ENCODE measurements at regions of chr11 and their contacts with region 1.

Region 1: GRCh38 chr11:67239783-67240575 is 26.3 kb upstream of the GRK2 start:
- DNase-seq: peak; percentile 87 to 98 (median 96)
- ATAC-seq: peak; percentile 85 to 86
- H3K4me3 Mint-ChIP-seq: peak overlapping the region; percentile 94 to 100 (median 98)
- H3K27ac Mint-ChIP-seq: peak overlapping the region; percentile 97 to 100 (median 100)
- H3K4me1 Mint-ChIP-seq: peaks cover 37 to 61% (median 54%) of the 10 kb centered on the region in 4 donors
- H3K27me3 Mint-ChIP-seq: no peaks in the 10 kb centered on the region

Region 2: GRCh38 chr11:67167086-67167485 is 72.9 kb before region 1 on chr11:
- POLR2A ChIA-PET with region 1: no interaction called
- DNase-seq: no peak
- ATAC-seq: no peak
- H3K4me3 Mint-ChIP-seq: no peak overlapping the region
- H3K27ac Mint-ChIP-seq: peak overlapping the region in 5 of 10 donors; percentile 5 to 75 (median 65)
- H3K4me1 Mint-ChIP-seq: peaks cover 15 to 61% (median 48%) of the 10 kb centered on the region in 4 donors
- H3K27me3 Mint-ChIP-seq: no peaks in the 10 kb centered on the region

Region 3: DNA sequence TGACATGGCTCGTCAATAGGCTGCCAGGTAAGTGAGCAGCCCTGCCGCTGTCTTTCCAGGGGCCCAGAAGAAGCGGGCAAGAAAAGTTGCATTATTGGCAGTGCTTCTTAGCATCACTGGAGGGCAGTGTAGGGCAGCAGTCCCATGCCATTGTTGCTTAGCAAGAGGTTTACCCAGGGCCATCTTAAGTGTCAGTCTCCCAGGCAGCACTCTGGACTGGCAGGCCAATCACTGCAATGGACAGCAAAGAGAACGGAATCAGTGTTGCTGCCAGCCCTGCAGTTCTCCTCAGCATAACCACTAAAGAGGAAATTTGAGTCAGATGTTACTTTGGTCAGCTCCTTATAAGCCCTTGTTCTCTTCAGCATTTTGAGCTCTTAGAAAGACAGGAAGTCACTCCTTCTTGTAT is 12.9 kb after region 1 on chr11:
- POLR2A ChIA-PET with region 1: interaction called, 24 read pairs
- DNase-seq: peak in 5 of 10 donors; percentile 41 to 56 (median 52)
- ATAC-seq: peak; percentile 62 to 84
- H3K4me3 Mint-ChIP-seq: peak overlapping the region in 4 of 10 donors; percentile 0 to 41 (median 10)
- H3K27ac Mint-ChIP-seq: peak overlapping the region; percentile 12 to 87 (median 68)
- H3K4me1 Mint-ChIP-seq: peaks cover 20 to 50% (median 30%) of the 10 kb centered on the region in 4 donors
- H3K27me3 Mint-ChIP-seq: no peaks in the 10 kb centered on the region

Region 4: DNA sequence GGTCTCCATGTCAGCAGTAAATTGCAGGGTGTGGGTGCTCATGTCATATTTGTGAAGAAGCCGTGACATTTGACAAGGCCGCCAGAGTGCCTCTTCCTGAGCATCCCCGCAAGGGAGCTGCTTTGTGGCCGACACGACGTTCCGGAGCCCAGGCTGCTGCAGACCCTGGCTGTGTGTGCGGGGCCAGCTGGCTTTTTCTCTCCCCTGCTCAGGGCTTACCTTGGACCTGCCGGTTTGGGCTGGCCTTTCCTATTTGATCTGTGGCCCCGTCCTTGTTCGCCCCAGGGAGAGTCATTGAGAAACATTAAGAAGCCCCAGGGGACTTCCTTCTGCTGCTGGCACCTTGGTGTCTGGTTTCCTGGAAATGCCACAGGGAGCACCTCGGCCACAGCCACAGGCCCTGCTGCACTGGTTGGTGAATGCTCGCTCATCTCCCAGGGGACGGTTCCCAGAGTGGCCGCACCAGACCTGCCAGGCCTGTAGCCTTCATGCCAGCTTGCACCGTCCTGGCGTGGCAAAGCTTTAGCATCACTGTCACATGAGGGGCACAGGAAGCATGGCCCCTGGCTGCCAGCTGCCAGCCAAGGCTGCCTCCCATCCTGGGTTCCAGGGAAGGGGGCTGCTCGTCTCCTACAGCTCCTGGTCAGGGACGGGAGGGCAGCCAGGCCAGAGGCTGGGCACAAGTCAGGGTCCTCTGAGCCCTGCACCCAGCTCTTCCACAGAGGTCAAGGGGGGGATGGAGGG is 31.7 kb after region 1 on chr11:
- POLR2A ChIA-PET with region 1: interaction called, 34 read pairs
- DNase-seq: peak in 6 of 10 donors; percentile 36 to 75 (median 70)
- ATAC-seq: peak; percentile 36 to 48
- H3K4me3 Mint-ChIP-seq: peak overlapping the region; percentile 92 to 98 (median 96)
- H3K27ac Mint-ChIP-seq: peak overlapping the region; percentile 95 to 100 (median 97)
- H3K4me1 Mint-ChIP-seq: peaks cover 39 to 89% (median 78%) of the 10 kb centered on the region in 4 donors
- H3K27me3 Mint-ChIP-seq: no peaks in the 10 kb centered on the region

Region 5: DNA sequence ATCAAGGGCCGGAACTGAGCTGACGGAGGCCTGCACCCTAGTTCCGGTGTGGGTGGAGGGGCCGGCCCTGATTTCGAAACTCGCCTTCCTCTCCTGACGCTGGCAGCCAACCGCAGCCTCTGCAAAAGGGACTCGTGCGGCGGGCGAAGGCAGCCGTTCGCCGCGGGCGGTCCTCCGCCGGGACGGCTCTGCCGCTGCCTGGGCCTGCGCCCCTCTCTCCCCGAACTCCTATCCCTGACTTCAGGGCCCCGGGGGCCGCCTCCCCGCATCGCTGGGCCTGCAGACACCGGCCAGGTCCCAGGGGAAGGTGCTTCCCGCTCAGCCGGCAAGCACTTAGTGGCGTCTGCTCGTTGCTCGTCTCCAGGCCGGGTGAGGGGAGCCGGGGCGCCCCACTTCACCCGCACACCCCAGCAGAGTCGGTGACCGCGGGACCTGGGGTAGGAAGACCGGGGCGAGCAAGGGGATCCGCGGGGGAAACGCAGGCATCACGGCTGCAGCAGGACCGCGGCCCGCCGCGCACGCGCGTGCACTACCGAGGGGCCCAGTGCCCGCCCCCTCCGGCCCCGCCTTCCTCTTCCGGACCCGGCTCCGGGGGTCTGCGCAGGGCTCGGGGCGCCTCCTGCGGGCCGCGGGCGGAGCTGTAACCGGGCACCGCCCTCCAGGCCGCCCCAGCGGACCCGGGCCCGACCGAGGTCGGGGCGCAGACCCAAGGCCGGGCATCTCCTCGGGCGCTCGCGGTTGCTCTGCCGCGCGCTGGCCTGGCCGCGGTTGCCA is 48.7 kb after region 1 on chr11:
- POLR2A ChIA-PET with region 1: interaction called, 28 read pairs
- DNase-seq: peak; percentile 85 to 95 (median 94)
- ATAC-seq: peak; percentile 67 to 71
- H3K4me3 Mint-ChIP-seq: peak overlapping the region; percentile 78 to 90 (median 88)
- H3K27ac Mint-ChIP-seq: peak overlapping the region; percentile 97 to 100 (median 98)
- H3K4me1 Mint-ChIP-seq: peaks cover 24 to 76% (median 62%) of the 10 kb centered on the region in 4 donors
- H3K27me3 Mint-ChIP-seq: no peaks in the 10 kb centered on the region

Region 6: DNA sequence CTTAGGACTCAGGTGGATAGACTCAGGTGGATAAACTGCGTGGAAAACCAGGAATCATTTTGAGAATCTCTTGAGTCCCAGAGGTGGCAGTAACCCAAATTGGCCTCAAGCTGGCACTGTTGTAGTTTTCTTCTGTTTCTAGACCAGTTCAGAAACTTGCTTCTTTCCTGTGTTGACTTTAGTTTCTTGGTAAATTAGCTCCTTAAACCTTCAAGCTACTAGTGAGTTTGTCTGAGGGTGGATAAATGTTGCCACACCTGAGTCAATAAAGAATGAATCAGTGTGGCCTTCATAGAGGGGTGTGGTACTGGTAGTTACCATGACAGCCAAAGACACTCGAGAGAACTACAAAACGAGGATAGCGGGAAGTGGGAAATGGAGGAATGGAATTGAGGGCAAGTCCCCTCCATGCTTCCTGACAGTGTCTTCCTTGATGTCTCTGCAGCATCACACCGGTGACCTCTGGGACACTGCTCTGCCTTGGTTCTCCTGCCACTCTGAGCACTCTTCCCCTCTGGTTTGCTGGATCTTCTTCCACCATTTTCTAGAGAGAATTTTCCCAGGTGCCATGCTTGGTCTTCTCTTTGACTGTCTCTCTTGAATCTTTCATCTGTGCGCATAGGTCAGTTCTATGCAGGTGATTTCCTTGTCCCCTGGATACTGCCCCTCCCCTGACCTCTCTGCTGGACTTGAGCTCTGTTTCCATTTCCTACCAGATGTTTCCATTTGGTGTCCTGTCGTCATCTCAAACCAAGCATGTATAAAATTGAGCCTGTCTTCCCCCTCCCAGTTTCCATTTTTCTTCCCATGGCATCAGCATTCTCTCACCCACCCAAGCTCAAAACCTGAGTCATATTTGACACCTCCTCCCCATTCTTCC is 106.2 kb after region 1 on chr11:
- POLR2A ChIA-PET with region 1: interaction called, 17 read pairs
- DNase-seq: peak in 3 of 10 donors; percentile 29 to 57 (median 47)
- ATAC-seq: peak; percentile 58 to 74
- H3K4me3 Mint-ChIP-seq: peak overlapping the region in 8 of 10 donors; percentile 12 to 76 (median 66)
- H3K27ac Mint-ChIP-seq: peak overlapping the region in 9 of 10 donors; percentile 89 to 99 (median 94)
- H3K4me1 Mint-ChIP-seq: peaks cover 29 to 65% (median 61%) of the 10 kb centered on the region in 4 donors
- H3K27me3 Mint-ChIP-seq: no peaks in the 10 kb centered on the region

Measured in naive thymus-derived CD8-positive, alpha-beta T cell (primary cell).